GM12878 (cell line): ENCODE measurements at regions of chr1 and their contacts with region 1.

Region 1: DNA sequence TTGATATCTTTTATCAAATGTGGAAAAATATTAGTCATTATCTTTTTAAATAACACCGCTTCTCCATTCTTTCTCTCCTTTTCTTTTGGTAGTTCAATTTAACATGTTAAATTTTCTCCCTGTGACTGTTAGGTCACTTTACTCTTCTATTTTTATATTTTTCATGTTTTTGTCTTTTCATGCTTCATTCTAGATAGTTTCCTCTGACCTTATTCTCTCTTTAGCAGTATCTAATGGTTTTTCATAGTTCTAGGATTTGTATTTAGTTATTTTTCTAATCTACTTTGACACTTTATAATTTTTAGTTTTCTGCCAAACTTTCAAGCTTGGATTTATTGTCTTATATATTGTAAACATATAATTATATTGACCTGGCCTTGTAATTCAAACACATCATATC is 116.0 kb downstream of the RASAL2 start:
- DNase-seq: no peak
- ATAC-seq: no peak
- H3K4me3 ChIP-seq: no peak overlapping the region
- H3K27ac ChIP-seq: no peak overlapping the region
- H3K4me1 ChIP-seq: no peaks in the 10 kb centered on the region
- H3K27me3 ChIP-seq: no peaks in the 10 kb centered on the region
- CTCF ChIP-seq: no peak
- EP300 ChIP-seq: no peak
- POLR2A ChIP-seq: no peak
- RAD21 ChIP-seq: no peak

Region 2: DNA sequence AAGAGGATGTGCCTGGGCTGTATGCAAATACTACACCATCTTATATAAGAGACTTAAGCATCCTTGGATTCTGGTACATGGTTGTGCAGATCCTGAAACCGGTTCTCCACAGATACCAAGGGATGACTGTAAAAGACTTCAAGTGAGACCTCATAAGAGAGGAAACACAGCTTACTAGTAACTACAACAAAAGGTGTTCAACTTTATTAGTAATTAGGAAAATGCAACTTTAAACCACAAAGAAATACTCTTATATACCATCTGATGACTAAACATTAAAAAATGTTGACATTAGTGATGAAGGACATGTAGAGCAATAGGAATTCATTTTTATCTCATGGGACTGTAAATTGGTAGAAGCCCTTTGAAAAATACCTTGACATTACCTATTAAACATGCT is 13.3 kb before region 1 on chr1:
- CTCF ChIA-PET with region 1: no interaction called
- POLR2A ChIA-PET with region 1: interaction called, 5 read pairs
- RAD21 ChIA-PET with region 1: no interaction called
- SMC1A ChIA-PET with region 1: interaction called, 11 read pairs
- in situ Hi-C with region 1: no loop called
- intact Hi-C with region 1: no loop called
- DNase-seq: no peak
- ATAC-seq: no peak
- H3K4me3 ChIP-seq: no peak overlapping the region
- H3K27ac ChIP-seq: no peak overlapping the region
- H3K4me1 ChIP-seq: no peaks in the 10 kb centered on the region
- H3K27me3 ChIP-seq: no peaks in the 10 kb centered on the region
- CTCF ChIP-seq: no peak
- EP300 ChIP-seq: no peak
- POLR2A ChIP-seq: no peak
- RAD21 ChIP-seq: no peak